CD14-positive monocyte (primary cell): ENCODE measurements at regions of chr3 and their contacts with region 1.

Region 1: DNA sequence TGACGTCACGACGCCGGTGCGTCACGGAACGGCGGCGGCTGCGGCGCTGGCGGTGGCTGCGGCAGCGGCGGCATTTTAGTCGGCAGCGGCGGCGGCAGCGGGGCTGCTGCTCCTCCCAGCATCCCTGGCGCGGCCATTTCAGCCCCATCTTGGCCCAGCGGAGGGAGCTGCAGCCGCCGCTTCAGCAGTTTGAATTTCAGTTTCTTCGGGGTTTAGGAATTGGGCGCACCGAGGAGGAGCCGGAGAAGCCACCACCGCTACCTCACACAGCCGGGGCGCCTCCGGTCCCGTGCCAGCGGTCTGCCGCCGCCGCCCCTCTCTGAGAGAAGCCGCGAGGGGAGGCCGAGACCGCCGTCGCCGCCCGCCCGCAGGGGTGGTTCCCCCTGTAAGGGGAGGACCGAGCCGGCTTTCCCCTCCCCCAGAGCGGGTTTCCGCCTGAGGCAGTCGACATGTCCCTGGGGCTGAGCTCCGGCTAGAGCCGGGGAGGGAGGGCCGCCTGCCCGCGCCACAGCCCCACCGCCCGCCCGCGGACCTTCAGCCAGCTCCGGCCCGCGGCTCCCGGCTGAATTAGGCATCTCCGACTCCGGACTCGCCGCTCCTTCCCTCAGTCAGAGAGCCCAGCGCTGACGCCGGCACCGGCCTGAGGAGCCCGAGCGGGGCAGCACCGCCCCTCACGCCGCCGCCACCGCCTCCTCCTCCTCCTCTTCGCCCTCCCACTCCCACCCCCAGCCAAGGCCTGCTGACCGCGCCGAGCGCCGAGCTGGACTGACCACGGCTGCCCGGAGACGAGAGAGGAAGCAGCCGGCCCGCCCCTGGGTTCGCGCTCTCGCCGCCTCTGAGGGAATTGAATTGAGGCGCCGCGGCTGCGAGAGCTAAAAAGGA is at the start of gene TSC22D2:
- DNase-seq: peak; percentile 94
- H3K4me3 ChIP-seq: peak within 1 kb of the TSS; percentile 79 to 98 (median 93)
- H3K4me3 Mint-ChIP-seq: peak within 1 kb of the TSS; percentile 98 to 99
- H3K27ac ChIP-seq: peak within 1 kb of the TSS; percentile 92 to 99
- H3K27ac Mint-ChIP-seq: peak within 1 kb of the TSS; percentile 97 to 99 (median 98)
- H3K4me1 ChIP-seq: peaks cover 27 to 37% of the 10 kb centered on the region in 2 donors
- H3K4me1 Mint-ChIP-seq: peaks cover 23% of the 10 kb centered on the region
- H3K27me3 ChIP-seq: no peaks in the 10 kb centered on the region
- H3K27me3 Mint-ChIP-seq: peaks cover 0 to 1% (median 0%) of the 10 kb centered on the region in 3 donors
- CTCF ChIP-seq: no peak
- polyA plus RNA-seq, gene TSC22D2: 5.1 to 12.9 (median 5.7) TPM

Region 2: GRCh38 chr3:149969940-149970715 is 438.3 kb before region 1 on chr3:
- intact Hi-C with region 1: no loop called
- DNase-seq: peak; percentile 21 to 43 (median 32)
- H3K4me3 ChIP-seq: peak overlapping the region; percentile 34 to 73 (median 39)
- H3K4me3 Mint-ChIP-seq: peak overlapping the region; percentile 86 to 88
- H3K27ac ChIP-seq: no peak overlapping the region
- H3K27ac Mint-ChIP-seq: no peak overlapping the region
- H3K4me1 ChIP-seq: peaks cover 11 to 25% of the 10 kb centered on the region in 2 donors
- H3K4me1 Mint-ChIP-seq: peaks cover 21% of the 10 kb centered on the region
- H3K27me3 ChIP-seq: peaks cover 55 to 61% of the 10 kb centered on the region in 2 donors
- H3K27me3 Mint-ChIP-seq: peaks cover 50 to 67% (median 55%) of the 10 kb centered on the region in 3 donors
- CTCF ChIP-seq: no peak

Region 3: GRCh38 chr3:150384296-150385212 is 23.9 kb before region 1 on chr3:
- intact Hi-C with region 1: loop called in 1 of 2 experiments (anchors 1 kb)
- DNase-seq: peak; percentile 93 to 97 (median 94)
- H3K4me3 ChIP-seq: peak overlapping the region; percentile 12 to 72 (median 42)
- H3K4me3 Mint-ChIP-seq: peak overlapping the region; percentile 79 to 84
- H3K27ac ChIP-seq: peak overlapping the region; percentile 51 to 82
- H3K27ac Mint-ChIP-seq: peak overlapping the region; percentile 86 to 97 (median 93)
- H3K4me1 ChIP-seq: peaks cover 19 to 27% of the 10 kb centered on the region in 2 donors
- H3K4me1 Mint-ChIP-seq: peaks cover 21% of the 10 kb centered on the region
- H3K27me3 ChIP-seq: no peaks in the 10 kb centered on the region
- H3K27me3 Mint-ChIP-seq: peaks cover 2 to 3% (median 2%) of the 10 kb centered on the region in 3 donors
- CTCF ChIP-seq: peak; percentile 80

Region 4: GRCh38 chr3:150495563-150496168 is 87.2 kb after region 1 on chr3:
- intact Hi-C with region 1: loop called in 1 of 2 experiments (anchors 10 kb)
- DNase-seq: peak; percentile 29 to 59 (median 45)
- H3K4me3 ChIP-seq: no peak overlapping the region
- H3K4me3 Mint-ChIP-seq: peak overlapping the region in 1 of 2 donors; percentile 15
- H3K27ac ChIP-seq: no peak overlapping the region
- H3K27ac Mint-ChIP-seq: peak overlapping the region in 1 of 7 donors; percentile 53
- H3K4me1 ChIP-seq: peaks cover 10 to 15% of the 10 kb centered on the region in 2 donors
- H3K4me1 Mint-ChIP-seq: peaks cover 16% of the 10 kb centered on the region
- H3K27me3 ChIP-seq: no peaks in the 10 kb centered on the region
- H3K27me3 Mint-ChIP-seq: peaks cover 0 to 3% (median 0%) of the 10 kb centered on the region in 3 donors
- CTCF ChIP-seq: peak; percentile 93

Region 5: DNA sequence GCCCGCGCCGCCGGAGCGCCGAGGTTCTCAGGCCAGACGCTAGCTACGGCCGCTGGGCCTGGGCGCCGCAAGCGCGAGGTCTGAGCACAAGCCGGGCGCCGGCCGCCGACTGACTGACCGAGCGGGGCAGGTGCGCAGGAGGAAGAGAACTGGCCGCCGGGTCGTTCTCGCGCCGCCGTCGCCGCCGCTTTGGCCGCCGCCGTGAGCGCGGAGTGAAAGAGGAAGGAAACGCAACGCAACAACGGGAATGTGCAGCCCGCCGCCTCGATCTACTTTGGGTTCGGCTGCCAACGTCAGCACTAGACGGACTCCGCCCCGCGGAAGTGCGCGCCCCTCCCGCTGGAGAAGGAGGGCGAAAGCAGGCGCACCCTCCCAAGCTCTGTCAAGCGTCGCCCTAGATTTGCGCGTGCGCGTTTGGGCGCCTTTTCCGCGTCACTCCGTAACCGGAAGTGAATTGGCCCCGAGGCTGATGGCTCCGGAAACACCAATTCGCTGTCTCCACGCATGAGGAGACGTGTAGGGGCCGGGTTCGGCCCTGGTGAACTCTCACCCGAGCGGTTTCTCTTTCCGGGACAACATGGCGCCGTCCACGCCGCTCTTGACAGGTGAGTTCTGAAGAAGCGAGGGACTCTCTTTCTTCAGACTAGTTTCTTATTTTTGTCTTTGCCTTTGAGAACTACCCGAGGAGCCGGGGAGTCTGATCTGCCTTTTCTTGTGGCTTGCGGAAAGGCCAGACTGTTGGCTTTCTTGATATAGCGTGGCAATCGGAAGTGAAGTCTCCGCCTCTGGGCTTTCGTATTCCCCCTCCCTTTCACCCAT is 138.0 kb after region 1 on chr3 and contains the starts of genes EIF2A and SERP1:
- intact Hi-C with region 1: loop called (anchors 2 to 5 kb)
- DNase-seq: peak; percentile 100
- H3K4me3 ChIP-seq: peak within 1 kb of the TSS; percentile 96 to 98 (median 97)
- H3K4me3 Mint-ChIP-seq: peak within 1 kb of the TSS; percentile 99
- H3K27ac ChIP-seq: peak within 1 kb of the TSS; percentile 93 to 99
- H3K27ac Mint-ChIP-seq: peak within 1 kb of the TSS; percentile 96 to 100 (median 99)
- H3K4me1 ChIP-seq: peaks cover 34 to 55% of the 10 kb centered on the region in 2 donors
- H3K4me1 Mint-ChIP-seq: peaks cover 51% of the 10 kb centered on the region
- H3K27me3 ChIP-seq: no peaks in the 10 kb centered on the region
- H3K27me3 Mint-ChIP-seq: peaks cover 0 to 3% (median 0%) of the 10 kb centered on the region in 3 donors
- CTCF ChIP-seq: no peak
- polyA plus RNA-seq, gene EIF2A: 48.5 to 88.7 (median 50.8) TPM
- polyA plus RNA-seq, gene SERP1: 178 to 226 (median 220) TPM

Region 6: GRCh38 chr3:150603153-150603979 is 194.9 kb after region 1 on chr3 and contains the start of gene SELENOT:
- intact Hi-C with region 1: loop called in 1 of 2 experiments (anchors 10 kb)
- DNase-seq: peak; percentile 95 to 97 (median 97)
- H3K4me3 ChIP-seq: peak within 1 kb of the TSS; percentile 59 to 86 (median 71)
- H3K4me3 Mint-ChIP-seq: peak within 1 kb of the TSS; percentile 99
- H3K27ac ChIP-seq: peak within 1 kb of the TSS; percentile 93 to 96
- H3K27ac Mint-ChIP-seq: peak within 1 kb of the TSS; percentile 98 to 100 (median 99)
- H3K4me1 ChIP-seq: peaks cover 31 to 48% of the 10 kb centered on the region in 2 donors
- H3K4me1 Mint-ChIP-seq: peaks cover 48% of the 10 kb centered on the region
- H3K27me3 ChIP-seq: no peaks in the 10 kb centered on the region
- H3K27me3 Mint-ChIP-seq: peaks cover 0 to 4% (median 0%) of the 10 kb centered on the region in 3 donors
- CTCF ChIP-seq: peak; percentile 10
- polyA plus RNA-seq, gene SELENOT: 210 to 549 (median 492) TPM

Region 7: GRCh38 chr3:150763122-150763841 is 354.8 kb after region 1 on chr3 and contains the start of gene SIAH2:
- intact Hi-C with region 1: loop called in 1 of 2 experiments (anchors 10 kb)
- DNase-seq: peak; percentile 91 to 93 (median 92)
- H3K4me3 ChIP-seq: peak within 1 kb of the TSS; percentile 82 to 86 (median 84)
- H3K4me3 Mint-ChIP-seq: peak within 1 kb of the TSS; percentile 97
- H3K27ac ChIP-seq: peak within 1 kb of the TSS; percentile 100
- H3K27ac Mint-ChIP-seq: peak within 1 kb of the TSS; percentile 100
- H3K4me1 ChIP-seq: peaks cover 36 to 41% of the 10 kb centered on the region in 2 donors
- H3K4me1 Mint-ChIP-seq: peaks cover 39% of the 10 kb centered on the region
- H3K27me3 ChIP-seq: no peaks in the 10 kb centered on the region
- H3K27me3 Mint-ChIP-seq: peaks cover 0 to 3% (median 0%) of the 10 kb centered on the region in 3 donors
- CTCF ChIP-seq: no peak
- polyA plus RNA-seq, gene SIAH2: 24.6 to 43.5 (median 28.2) TPM